Vagina (tissue), 2 donors: ENCODE measurements at regions of chr14 and their contacts with region 1.

Region 1: DNA sequence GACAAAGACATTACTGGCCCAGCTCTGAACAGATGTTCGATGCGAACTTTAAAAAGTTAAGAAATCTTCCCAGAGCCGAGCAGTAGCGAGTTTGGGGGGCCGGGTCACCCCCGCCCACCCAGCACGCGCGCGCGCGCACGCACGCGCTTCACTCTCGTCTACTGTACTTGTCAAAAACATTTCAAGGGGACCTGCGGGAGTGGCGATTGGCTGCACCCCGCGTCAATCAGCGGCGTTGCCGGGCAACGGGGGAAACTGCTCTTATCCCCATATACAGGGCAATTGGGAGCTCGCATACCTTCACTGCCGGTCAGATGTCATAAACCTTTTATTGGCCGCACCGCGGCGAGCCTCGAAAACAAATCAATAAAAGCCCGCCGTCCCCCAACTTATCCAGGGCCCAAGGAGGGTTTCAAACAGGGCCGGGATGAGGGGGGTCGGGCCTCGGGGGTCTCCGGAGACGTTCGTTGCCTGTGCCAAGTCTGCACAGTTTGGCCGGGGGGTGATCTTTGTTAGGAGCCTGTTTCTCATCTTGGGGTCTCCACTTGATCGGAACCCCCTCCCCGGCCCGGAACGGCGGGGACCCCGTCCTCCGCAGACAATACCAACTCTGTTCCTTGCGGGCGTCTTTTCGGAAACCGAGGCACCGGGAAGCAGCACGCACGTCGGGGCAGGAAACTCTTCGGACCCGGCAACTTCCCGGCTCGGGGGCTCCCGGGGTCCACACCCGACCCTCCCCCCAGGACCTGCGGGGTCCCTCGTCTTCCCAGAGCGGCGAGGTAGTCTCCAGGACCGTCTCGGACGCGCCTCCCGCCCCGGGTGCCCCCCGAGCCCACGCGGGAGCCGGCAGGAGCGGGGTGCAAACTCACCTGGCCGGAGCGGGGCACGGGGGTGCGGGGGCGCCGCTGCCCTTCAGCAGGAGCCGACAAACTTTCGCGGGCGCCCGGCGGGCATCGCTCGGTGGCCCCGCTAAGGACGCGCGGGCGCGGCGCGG is 734 bp downstream of the FOXN3 start:
- DNase-seq: peak; percentile 98 to 100
- H3K4me3 ChIP-seq: peak overlapping the region; percentile 88 to 99
- H3K27ac ChIP-seq: peak overlapping the region; percentile 98
- H3K4me1 ChIP-seq: peaks cover 52% of the 10 kb centered on the region
- H3K27me3 ChIP-seq: no peaks in the 10 kb centered on the region
- CTCF ChIP-seq: no peak
- POLR2A ChIP-seq: peak in 1 of 2 donors; percentile 9

Region 2: DNA sequence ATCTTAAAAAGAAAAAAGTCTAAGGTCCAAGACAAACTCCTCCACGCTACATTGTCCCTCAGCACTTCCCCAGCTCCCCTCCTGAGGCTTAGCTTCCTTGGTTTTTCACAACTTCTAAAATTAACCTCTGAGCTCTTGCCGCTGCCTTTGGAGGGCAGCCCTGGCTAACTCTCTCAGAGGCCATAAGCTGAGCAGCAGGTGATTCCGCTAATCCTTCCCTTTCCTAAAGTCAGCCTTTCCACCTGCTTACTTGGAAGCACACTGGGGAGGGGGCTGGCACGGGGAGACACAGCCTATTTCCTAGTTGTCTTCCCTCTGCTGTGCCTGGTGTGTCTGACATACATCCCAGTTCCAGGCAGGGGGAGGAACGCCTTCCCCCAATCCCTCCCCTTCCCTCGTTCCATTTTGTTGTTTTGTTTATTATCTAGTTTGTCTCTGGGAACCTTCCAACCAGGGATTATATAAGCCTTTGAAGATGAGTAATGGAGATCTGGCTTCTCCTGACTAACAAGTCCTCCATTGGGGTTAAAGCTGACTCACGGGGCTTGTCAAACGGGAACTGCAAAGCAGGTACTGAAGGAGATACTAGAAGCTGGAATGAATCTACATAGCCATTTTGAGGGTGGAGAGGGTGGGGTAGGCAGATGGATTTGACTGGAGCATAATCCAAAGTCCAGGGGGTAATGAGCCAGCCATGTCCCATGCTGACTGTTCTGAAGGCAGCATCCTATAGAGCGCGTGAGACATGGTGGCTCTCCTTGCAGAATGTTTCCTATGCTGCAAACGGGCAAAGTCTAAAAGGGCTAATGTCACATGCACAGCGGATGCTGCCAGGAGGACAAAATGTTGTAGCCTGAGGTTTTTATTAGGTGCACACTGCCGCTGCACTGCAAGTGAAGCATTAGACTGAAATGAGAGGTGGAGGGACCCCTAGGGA is 230.1 kb before region 1 on chr14:
- intact Hi-C with region 1: loop called (anchors 10 kb)
- DNase-seq: no peak
- H3K4me3 ChIP-seq: no peak overlapping the region
- H3K27ac ChIP-seq: peak overlapping the region; percentile 34
- H3K4me1 ChIP-seq: peaks cover 34% of the 10 kb centered on the region
- H3K27me3 ChIP-seq: no peaks in the 10 kb centered on the region
- CTCF ChIP-seq: no peak
- POLR2A ChIP-seq: no peak

Region 3: GRCh38 chr14:89701211-89702043 is 285.1 kb after region 1 on chr14:
- intact Hi-C with region 1: loop called (anchors 10 kb)
- DNase-seq: no peak
- H3K4me3 ChIP-seq: peak overlapping the region; percentile 59 to 71
- H3K27ac ChIP-seq: peak overlapping the region; percentile 73
- H3K4me1 ChIP-seq: peaks cover 17% of the 10 kb centered on the region
- H3K27me3 ChIP-seq: no peaks in the 10 kb centered on the region
- CTCF ChIP-seq: no peak
- POLR2A ChIP-seq: no peak

Region 4: GRCh38 chr14:89755816-89756215 is 339.5 kb after region 1 on chr14:
- intact Hi-C with region 1: no loop called
- DNase-seq: no peak
- H3K4me3 ChIP-seq: no peak overlapping the region
- H3K27ac ChIP-seq: no peak overlapping the region
- H3K4me1 ChIP-seq: no peaks in the 10 kb centered on the region
- H3K27me3 ChIP-seq: no peaks in the 10 kb centered on the region
- CTCF ChIP-seq: no peak
- POLR2A ChIP-seq: no peak